AG04450 (cell line): ENCODE measurements at regions of chr10 and their contacts with region 1.

Region 1: GRCh38 chr10:29392376-29393021 is 103.6 kb downstream of the LYZL1 start:
- DNase-seq: no peak
- H3K4me3 ChIP-seq: no peak overlapping the region
- H3K27ac ChIP-seq: no peak overlapping the region
- H3K27me3 ChIP-seq: peaks cover 38% of the 10 kb centered on the region
- CTCF ChIP-seq: peak; percentile 90

Region 2: GRCh38 chr10:29403208-29403607 is 10.7 kb after region 1 on chr10:
- CTCF ChIA-PET with region 1: interaction called, 36 read pairs
- POLR2A ChIA-PET with region 1: no interaction called
- DNase-seq: no peak
- H3K4me3 ChIP-seq: no peak overlapping the region
- H3K27ac ChIP-seq: no peak overlapping the region
- H3K27me3 ChIP-seq: peaks cover 3% of the 10 kb centered on the region
- CTCF ChIP-seq: no peak

Region 3: DNA sequence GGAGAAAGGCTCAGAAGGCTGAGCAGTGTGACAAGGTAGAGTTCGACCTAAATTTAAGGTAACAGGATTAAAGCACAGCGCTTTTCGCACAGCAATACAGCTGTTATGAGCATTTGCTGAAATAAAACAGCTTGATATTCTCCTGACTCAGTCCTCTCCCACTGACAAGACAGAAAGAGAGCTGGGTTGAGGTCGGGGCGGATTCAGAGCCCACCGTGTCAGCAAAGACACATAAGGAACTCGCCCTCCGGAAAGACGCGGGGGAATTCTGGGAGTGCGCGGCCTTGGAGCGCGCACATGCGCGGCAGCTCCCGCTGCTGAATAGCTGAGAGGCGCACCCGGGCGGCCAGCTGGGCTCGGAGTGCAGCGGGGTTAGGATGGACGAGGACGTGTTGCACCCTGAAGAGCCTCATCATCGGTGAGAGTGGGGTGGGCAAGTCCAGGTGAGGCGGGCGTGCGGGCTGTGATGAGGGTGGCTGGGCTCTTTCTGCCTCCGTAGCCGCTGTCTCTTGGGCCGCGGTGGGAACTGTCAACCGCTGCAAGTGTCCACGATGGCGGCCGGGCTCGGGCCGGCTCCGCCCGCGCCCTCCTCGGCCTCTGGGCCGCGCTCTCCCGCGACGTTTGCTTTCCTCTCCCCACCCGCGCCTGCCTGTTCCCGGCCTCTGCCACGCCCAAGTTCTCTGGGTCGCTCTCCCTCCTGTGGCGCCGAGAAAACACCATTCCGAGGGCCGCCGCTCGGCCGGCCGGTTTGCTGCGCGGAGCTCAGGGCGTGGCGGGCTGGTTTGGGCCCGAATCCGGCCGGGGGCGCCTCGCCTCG is 16.9 kb after region 1 on chr10:
- CTCF ChIA-PET with region 1: interaction called, 36 read pairs
- POLR2A ChIA-PET with region 1: no interaction called
- DNase-seq: peak; percentile 8
- H3K4me3 ChIP-seq: peak overlapping the region; percentile 92
- H3K27ac ChIP-seq: peak overlapping the region; percentile 59
- H3K27me3 ChIP-seq: no peaks in the 10 kb centered on the region
- CTCF ChIP-seq: 0 out of 2 replicates have a peak, but pooled peaks have one; percentile 1

Region 4: GRCh38 chr10:29435809-29436501 is 43.5 kb after region 1 on chr10:
- CTCF ChIA-PET with region 1: no interaction called
- POLR2A ChIA-PET with region 1: no interaction called
- DNase-seq: no peak
- H3K4me3 ChIP-seq: no peak overlapping the region
- H3K27ac ChIP-seq: no peak overlapping the region
- H3K27me3 ChIP-seq: no peaks in the 10 kb centered on the region
- CTCF ChIP-seq: no peak